ENCODE measurements at regions of chr10 and their contacts with region 1.

Region 1: GRCh38 chr10:102225646-102226541 is at the start of gene ELOVL3:
- DNase-seq: peak; percentile 87
- H3K4me3 Mint-ChIP-seq: peak within 1 kb of the TSS; percentile 42
- H3K27ac Mint-ChIP-seq: no peak within 1 kb of the TSS
- H3K4me1 Mint-ChIP-seq: peaks cover 24% of the 10 kb centered on the region
- H3K27me3 Mint-ChIP-seq: peaks cover 59% of the 10 kb centered on the region
- total RNA-seq, gene ELOVL3: not detected

Region 2: DNA sequence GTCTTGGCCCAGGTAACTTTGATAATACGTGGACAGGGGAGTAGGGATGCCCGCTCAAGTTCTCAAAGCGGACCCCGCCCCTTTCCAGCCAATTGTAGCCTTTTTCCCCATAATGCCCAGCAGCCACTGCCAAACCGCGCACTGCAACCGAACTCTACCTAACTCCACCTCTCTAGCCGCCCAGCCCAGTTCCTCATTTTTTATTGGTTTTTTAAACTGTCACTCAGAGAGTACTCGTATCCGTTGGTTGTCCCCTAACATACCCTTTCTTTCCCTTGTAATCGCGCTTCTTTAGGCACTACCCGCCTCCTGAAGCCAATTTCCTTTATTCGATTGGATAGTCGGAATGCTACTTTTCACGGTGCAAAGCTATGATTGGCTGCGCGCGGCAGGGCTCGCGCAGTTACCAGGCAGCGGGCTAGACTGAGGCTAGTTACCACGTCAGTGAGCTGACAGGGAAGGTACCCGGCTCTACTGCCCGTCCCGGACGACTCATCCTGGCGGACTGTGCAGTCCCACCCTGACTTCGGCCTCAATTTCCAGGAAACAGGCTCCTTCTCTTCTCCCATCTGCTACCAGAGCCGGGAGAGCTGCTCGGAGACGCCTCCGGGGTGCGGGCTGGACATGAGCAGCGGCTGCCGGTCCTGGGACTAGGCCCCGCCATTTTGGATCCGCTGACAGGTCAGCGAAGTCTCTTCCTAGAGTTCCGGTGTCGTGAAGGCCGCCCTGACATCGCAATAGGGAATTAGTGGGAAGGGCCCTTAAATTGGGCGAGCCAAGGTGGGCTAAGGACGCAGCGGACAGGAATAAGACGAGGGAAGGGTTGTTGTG is 19.4 kb after region 1 on chr10 and contains the start of gene GBF1:
- CTCF ChIA-PET with region 1: interaction called, 71 read pairs
- POLR2A ChIA-PET with region 1: no interaction called
- DNase-seq: peak; percentile 94
- H3K4me3 Mint-ChIP-seq: peak within 1 kb of the TSS; percentile 97
- H3K27ac Mint-ChIP-seq: peak within 1 kb of the TSS; percentile 93
- H3K4me1 Mint-ChIP-seq: peaks cover 53% of the 10 kb centered on the region
- H3K27me3 Mint-ChIP-seq: peaks cover 15% of the 10 kb centered on the region
- total RNA-seq, gene GBF1: 42.4 to 44.6 TPM

Region 3: DNA sequence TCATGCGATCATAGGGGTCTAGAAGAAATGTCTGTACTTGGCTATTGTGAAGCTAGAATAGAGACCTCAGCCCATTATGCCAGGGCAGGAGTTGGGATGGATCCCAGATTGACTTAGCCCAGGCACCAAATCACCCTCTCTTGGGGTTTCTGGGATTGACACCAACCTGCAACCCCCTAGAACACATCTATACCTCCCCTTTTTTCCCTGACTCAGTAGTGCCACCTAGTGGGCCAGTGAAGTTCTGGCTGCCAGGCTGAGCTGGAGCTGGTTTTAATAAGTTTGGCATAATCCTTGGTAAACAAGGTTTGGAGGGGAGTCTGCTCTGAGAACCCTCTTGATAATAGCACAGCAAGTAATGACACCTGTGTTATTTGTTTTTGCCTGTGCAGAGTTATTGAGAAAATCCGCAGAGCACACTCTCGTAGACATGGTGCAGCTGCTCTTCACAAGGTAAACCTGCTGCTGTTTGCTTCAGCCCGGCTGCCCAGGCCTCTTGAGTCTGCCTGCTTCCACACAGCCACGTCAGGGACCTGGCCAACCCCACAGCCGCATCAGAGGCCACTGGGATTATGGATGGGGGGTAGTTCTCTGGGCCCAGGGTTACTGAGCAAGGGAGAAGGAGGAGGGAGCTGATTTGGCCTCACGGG is 126.3 kb after region 1 on chr10:
- CTCF ChIA-PET with region 1: interaction called, 170 read pairs
- POLR2A ChIA-PET with region 1: no interaction called
- DNase-seq: peak; percentile 80
- H3K4me3 Mint-ChIP-seq: no peak overlapping the region
- H3K27ac Mint-ChIP-seq: no peak overlapping the region
- H3K4me1 Mint-ChIP-seq: no peaks in the 10 kb centered on the region
- H3K27me3 Mint-ChIP-seq: no peaks in the 10 kb centered on the region

Region 4: GRCh38 chr10:102399217-102400089 is 173.6 kb after region 1 on chr10:
- CTCF ChIA-PET with region 1: interaction called, 118 read pairs
- POLR2A ChIA-PET with region 1: no interaction called
- DNase-seq: peak; percentile 88
- H3K4me3 Mint-ChIP-seq: peak overlapping the region; percentile 62
- H3K27ac Mint-ChIP-seq: peak overlapping the region; percentile 76
- H3K4me1 Mint-ChIP-seq: peaks cover 43% of the 10 kb centered on the region
- H3K27me3 Mint-ChIP-seq: no peaks in the 10 kb centered on the region

Region 5: DNA sequence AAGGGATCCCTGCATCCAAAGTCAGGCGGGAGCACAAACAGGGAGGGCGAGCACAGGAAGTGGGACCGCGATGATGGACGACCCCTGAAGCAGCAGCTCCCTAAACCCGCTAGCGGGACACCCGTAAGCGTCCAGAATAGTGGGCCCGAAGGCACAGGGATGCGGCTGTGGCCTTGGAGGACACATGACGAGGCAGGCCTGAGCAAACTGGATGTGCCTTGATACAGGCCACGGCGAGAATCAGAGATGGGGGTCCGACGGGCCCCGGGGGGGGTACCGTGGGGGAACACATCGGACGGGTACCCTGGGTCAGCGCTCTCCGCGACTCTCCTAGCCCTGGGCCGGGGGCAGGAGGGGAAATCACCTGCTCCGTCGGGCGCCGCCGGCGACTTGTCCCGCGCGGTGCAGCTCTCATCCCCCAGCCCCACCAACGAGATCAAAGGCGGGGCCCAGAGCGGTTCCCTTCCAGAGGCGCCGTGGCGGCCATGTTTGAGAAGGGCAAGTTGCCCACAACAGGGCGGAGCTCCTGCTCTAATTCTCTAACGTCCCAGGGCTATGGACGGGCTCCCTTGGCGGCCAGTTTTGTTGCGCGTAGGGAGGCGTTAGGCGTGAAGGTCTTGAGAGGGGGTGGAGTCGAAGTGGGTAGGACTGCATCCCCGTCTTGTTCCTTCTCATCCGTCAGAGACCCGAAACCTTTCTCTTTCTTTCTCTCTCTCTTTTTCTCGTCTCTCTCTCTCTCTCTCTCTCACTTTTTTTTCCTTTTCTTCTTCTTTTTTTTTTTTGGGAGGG is 206.5 kb after region 1 on chr10 and contains the start of gene CUEDC2:
- CTCF ChIA-PET with region 1: interaction called, 10 read pairs
- POLR2A ChIA-PET with region 1: no interaction called
- DNase-seq: peak; percentile 97
- H3K4me3 Mint-ChIP-seq: peak within 1 kb of the TSS; percentile 94
- H3K27ac Mint-ChIP-seq: peak within 1 kb of the TSS; percentile 95
- H3K4me1 Mint-ChIP-seq: peaks cover 49% of the 10 kb centered on the region
- H3K27me3 Mint-ChIP-seq: no peaks in the 10 kb centered on the region
- total RNA-seq, gene CUEDC2: 63.6 to 68.9 TPM